ENCODE measurements at regions of chr12 and their contacts with region 1.

Region 1: GRCh38 chr12:112012775-112013600 is at the starts of genes ERP29 and TMEM116:
- DNase-seq: peak; percentile 98 to 100 (median 99)
- ATAC-seq: peak; percentile 92
- H3K4me3 ChIP-seq: peak within 1 kb of the TSS; percentile 90
- H3K4me3 Mint-ChIP-seq: peak within 1 kb of the TSS; percentile 86 to 97 (median 91)
- H3K27ac ChIP-seq: peak within 1 kb of the TSS; percentile 96
- H3K27ac Mint-ChIP-seq: peak within 1 kb of the TSS; percentile 95 to 99 (median 97)
- H3K4me1 ChIP-seq: peaks cover 29 to 32% of the 10 kb centered on the region in 2 donors
- H3K4me1 Mint-ChIP-seq: peaks cover 41 to 67% (median 51%) of the 10 kb centered on the region in 7 donors
- H3K27me3 ChIP-seq: no peaks in the 10 kb centered on the region
- H3K27me3 Mint-ChIP-seq: no peaks in the 10 kb centered on the region
- total RNA-seq, gene ERP29: 115 to 184 (median 127) TPM
- total RNA-seq, gene TMEM116: 12.6 to 29.3 (median 23.0) TPM

Region 2: DNA sequence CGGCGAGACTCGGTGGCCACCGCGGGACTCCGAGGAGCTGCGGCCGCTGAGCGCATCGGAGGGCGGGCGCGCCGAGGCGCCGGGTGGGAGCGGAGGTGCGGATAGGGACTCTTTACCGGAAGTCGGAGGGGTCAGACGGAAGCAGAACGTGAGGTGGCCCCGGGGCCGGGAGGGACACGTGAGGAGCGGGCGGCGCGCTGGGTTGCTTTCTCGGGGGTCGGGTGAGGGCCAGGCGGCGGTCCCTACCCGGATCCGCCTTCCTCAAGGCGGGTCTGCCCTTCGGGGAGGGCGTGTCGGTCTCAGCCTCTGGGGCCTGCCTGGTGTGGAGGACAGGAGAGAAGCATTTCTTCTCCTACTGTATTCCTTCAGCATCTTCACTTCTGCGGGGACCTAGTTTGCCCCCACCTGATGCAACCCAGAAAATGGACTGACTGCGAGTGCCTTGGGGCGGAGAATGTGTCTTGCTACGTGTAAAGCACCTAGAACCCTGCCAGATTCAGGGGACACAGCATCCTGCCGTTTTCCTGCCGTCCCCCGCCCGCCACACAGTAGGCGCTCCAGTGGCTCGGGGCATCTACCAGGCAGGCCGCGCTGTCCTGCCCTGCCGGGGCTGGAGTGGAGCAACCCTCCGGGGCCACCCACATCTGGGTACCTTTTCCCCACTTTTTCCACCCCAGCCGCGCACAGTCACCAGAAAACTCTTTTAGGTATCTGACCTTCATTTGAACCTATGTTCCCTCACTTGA is 413.4 kb before region 1 on chr12:
- CTCF ChIA-PET with region 1: no interaction called
- POLR2A ChIA-PET with region 1: no interaction called
- intact Hi-C with region 1: loop called in 1 of 2 experiments (anchors 5 kb)
- DNase-seq: peak; percentile 82 to 94 (median 87)
- ATAC-seq: peak; percentile 89
- H3K4me3 ChIP-seq: peak overlapping the region; percentile 80
- H3K4me3 Mint-ChIP-seq: peak overlapping the region; percentile 74 to 93 (median 86)
- H3K27ac ChIP-seq: peak overlapping the region; percentile 80
- H3K27ac Mint-ChIP-seq: peak overlapping the region; percentile 83 to 93 (median 89)
- H3K4me1 ChIP-seq: peaks cover 3 to 5% of the 10 kb centered on the region in 2 donors
- H3K4me1 Mint-ChIP-seq: peaks cover 22 to 39% (median 26%) of the 10 kb centered on the region in 7 donors
- H3K27me3 ChIP-seq: no peaks in the 10 kb centered on the region
- H3K27me3 Mint-ChIP-seq: no peaks in the 10 kb centered on the region

Region 3: GRCh38 chr12:111841750-111842555 is 171.0 kb before region 1 on chr12 and contains the start of gene MAPKAPK5:
- CTCF ChIA-PET with region 1: interaction called, 3 read pairs
- POLR2A ChIA-PET with region 1: interaction called, 22 read pairs
- intact Hi-C with region 1: loop called (anchors 1 kb)
- DNase-seq: peak; percentile 95 to 99 (median 98)
- ATAC-seq: peak; percentile 93
- H3K4me3 ChIP-seq: peak within 1 kb of the TSS; percentile 99
- H3K4me3 Mint-ChIP-seq: peak within 1 kb of the TSS; percentile 90 to 99 (median 98)
- H3K27ac ChIP-seq: peak within 1 kb of the TSS; percentile 89
- H3K27ac Mint-ChIP-seq: peak within 1 kb of the TSS; percentile 91 to 100 (median 98)
- H3K4me1 ChIP-seq: peaks cover 28 to 32% of the 10 kb centered on the region in 2 donors
- H3K4me1 Mint-ChIP-seq: peaks cover 40 to 82% (median 69%) of the 10 kb centered on the region in 7 donors
- H3K27me3 ChIP-seq: no peaks in the 10 kb centered on the region
- H3K27me3 Mint-ChIP-seq: peaks cover 0 to 2% (median 0%) of the 10 kb centered on the region in 5 donors
- total RNA-seq, gene MAPKAPK5: 46.1 to 72.1 (median 60.0) TPM

Region 4: GRCh38 chr12:111975161-111975931 is 37.6 kb before region 1 on chr12:
- CTCF ChIA-PET with region 1: no interaction called
- POLR2A ChIA-PET with region 1: interaction called, 4 read pairs
- intact Hi-C with region 1: loop called in 1 of 2 experiments (anchors 5 kb)
- DNase-seq: no peak
- ATAC-seq: no peak
- H3K4me3 ChIP-seq: no peak overlapping the region
- H3K4me3 Mint-ChIP-seq: no peak overlapping the region
- H3K27ac ChIP-seq: no peak overlapping the region
- H3K27ac Mint-ChIP-seq: peak overlapping the region in 1 of 9 donors; percentile 51
- H3K4me1 ChIP-seq: peaks cover 0 to 16% of the 10 kb centered on the region in 2 donors
- H3K4me1 Mint-ChIP-seq: peaks cover 7 to 39% (median 25%) of the 10 kb centered on the region in 7 donors
- H3K27me3 ChIP-seq: no peaks in the 10 kb centered on the region
- H3K27me3 Mint-ChIP-seq: no peaks in the 10 kb centered on the region

Region 5: DNA sequence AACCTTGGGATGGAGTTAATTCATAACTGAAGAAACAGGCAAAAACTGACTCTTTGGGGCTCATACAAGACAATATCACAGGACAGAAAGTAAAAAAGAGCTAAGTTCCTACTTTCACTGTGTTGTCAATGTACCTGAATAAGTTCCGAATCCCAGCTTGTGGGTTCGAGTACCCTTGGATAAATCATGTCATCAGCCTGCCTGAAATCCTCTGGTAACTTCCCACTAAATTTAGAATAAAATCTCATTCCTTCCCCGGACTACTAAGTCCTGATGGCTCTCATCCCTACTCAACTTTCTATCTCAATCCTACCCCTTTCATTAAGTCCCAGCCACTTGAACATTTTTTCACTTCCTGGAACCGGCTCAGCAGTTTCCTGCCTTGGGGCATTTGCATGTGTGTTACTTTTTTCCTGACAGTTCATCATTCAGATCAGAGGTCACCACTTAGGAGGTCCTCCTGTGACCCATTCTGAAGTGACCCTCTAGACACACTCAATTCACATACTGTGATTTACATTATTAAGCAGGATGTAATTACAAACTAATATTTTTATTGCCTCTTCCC is 12.9 kb after region 1 on chr12:
- CTCF ChIA-PET with region 1: interaction called, 4 read pairs
- POLR2A ChIA-PET with region 1: interaction called, 10 read pairs
- intact Hi-C with region 1: loop called in 1 of 2 experiments (anchors 1 kb)
- DNase-seq: no peak
- ATAC-seq: no peak
- H3K4me3 ChIP-seq: no peak overlapping the region
- H3K4me3 Mint-ChIP-seq: peak overlapping the region in 1 of 10 donors; percentile 1
- H3K27ac ChIP-seq: peak overlapping the region; percentile 44
- H3K27ac Mint-ChIP-seq: peak overlapping the region; percentile 51 to 94 (median 72)
- H3K4me1 ChIP-seq: peaks cover 0 to 7% of the 10 kb centered on the region in 2 donors
- H3K4me1 Mint-ChIP-seq: peaks cover 14 to 56% (median 34%) of the 10 kb centered on the region in 7 donors
- H3K27me3 ChIP-seq: no peaks in the 10 kb centered on the region
- H3K27me3 Mint-ChIP-seq: no peaks in the 10 kb centered on the region

Region 6: GRCh38 chr12:112130441-112130998 is 117.5 kb after region 1 on chr12:
- CTCF ChIA-PET with region 1: no interaction called
- POLR2A ChIA-PET with region 1: interaction called, 4 read pairs
- intact Hi-C with region 1: loop called (anchors 1 kb)
- DNase-seq: peak in 7 of 9 donors; percentile 38 to 75 (median 67)
- ATAC-seq: peak; percentile 89
- H3K4me3 ChIP-seq: peak overlapping the region; percentile 33
- H3K4me3 Mint-ChIP-seq: peak overlapping the region in 9 of 10 donors; percentile 52 to 81 (median 70)
- H3K27ac ChIP-seq: peak overlapping the region; percentile 72
- H3K27ac Mint-ChIP-seq: peak overlapping the region; percentile 3 to 91 (median 85)
- H3K4me1 ChIP-seq: peaks cover 38 to 55% of the 10 kb centered on the region in 2 donors
- H3K4me1 Mint-ChIP-seq: peaks cover 32 to 72% (median 59%) of the 10 kb centered on the region in 7 donors
- H3K27me3 ChIP-seq: no peaks in the 10 kb centered on the region
- H3K27me3 Mint-ChIP-seq: no peaks in the 10 kb centered on the region

Region 7: GRCh38 chr12:113221181-113221997 is 1208.4 kb after region 1 on chr12 and contains the start of gene TPCN1:
- CTCF ChIA-PET with region 1: no interaction called
- POLR2A ChIA-PET with region 1: no interaction called
- intact Hi-C with region 1: loop called in 1 of 2 experiments (anchors 5 kb)
- DNase-seq: peak; percentile 94 to 99 (median 99)
- ATAC-seq: peak; percentile 97
- H3K4me3 ChIP-seq: peak within 1 kb of the TSS; percentile 70
- H3K4me3 Mint-ChIP-seq: peak within 1 kb of the TSS; percentile 79 to 99 (median 92)
- H3K27ac ChIP-seq: peak within 1 kb of the TSS; percentile 83
- H3K27ac Mint-ChIP-seq: peak within 1 kb of the TSS; percentile 81 to 97 (median 92)
- H3K4me1 ChIP-seq: peaks cover 17 to 32% of the 10 kb centered on the region in 2 donors
- H3K4me1 Mint-ChIP-seq: peaks cover 24 to 49% (median 45%) of the 10 kb centered on the region in 7 donors
- H3K27me3 ChIP-seq: no peaks in the 10 kb centered on the region
- H3K27me3 Mint-ChIP-seq: no peaks in the 10 kb centered on the region
- total RNA-seq, gene TPCN1: 49.5 to 124 (median 107) TPM